GM23248 (cell line): ENCODE measurements at regions of chr19 and their contacts with region 1.

Region 1: GRCh38 chr19:56076498-56076897 is 44.6 kb downstream of the ZNF787 start:
- DNase-seq: peak; percentile 72
- H3K4me3 ChIP-seq: no peak overlapping the region
- H3K27ac ChIP-seq: no peak overlapping the region
- H3K4me1 ChIP-seq: 0 out of 2 replicates have a peak, but pooled peaks cover 3% of the 10 kb centered on the region
- H3K27me3 ChIP-seq: no peaks in the 10 kb centered on the region

Region 2: DNA sequence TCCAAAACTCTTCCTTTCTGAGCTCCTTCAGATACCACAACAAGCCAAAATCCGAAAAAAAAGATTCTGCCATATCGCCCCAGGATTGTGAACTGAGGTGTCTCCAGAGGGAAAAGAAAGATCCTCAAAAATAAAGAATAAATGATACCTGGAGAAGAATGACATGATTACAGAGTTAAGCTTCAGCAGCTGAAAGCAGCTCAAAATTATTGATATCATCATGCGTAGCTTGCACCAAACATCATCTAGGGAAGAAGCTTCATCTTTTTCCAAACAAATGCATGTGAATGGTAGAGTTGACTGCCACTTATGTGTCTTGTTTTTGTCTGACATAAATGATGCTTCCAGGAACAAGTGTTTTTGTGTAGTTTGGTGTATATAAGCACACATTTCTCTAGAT is 338.2 kb before region 1 on chr19 and contains the start of gene NLRP9:
- in situ Hi-C with region 1: no loop called
- DNase-seq: no peak
- H3K4me3 ChIP-seq: no peak within 1 kb of the TSS
- H3K27ac ChIP-seq: no peak within 1 kb of the TSS
- H3K4me1 ChIP-seq: no peaks in the 10 kb centered on the region
- H3K27me3 ChIP-seq: no peaks in the 10 kb centered on the region
- total RNA-seq, gene NLRP9: not detected in 2 replicates

Region 3: DNA sequence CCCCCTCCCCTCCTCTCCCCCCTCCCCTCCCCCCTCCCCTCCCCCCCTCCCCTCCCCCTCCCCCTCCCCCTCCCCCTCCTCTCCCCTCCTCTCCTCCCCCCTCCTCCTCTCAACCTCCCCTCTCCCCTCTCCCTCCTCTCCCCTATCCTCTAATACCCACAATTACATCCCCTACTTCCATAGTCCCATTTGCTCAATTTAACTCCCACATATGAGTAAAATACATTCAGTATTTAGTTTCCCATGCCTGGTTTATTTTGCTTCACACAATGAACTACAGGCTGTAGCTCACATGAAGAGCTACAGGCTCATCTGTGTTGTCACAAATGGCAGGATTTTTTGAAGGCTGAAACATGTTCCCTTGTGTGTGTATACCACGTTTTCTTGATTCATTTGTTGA is 83.0 kb before region 1 on chr19:
- in situ Hi-C with region 1: no loop called
- DNase-seq: peak; percentile 2
- H3K4me3 ChIP-seq: no peak overlapping the region
- H3K27ac ChIP-seq: no peak overlapping the region
- H3K4me1 ChIP-seq: no peaks in the 10 kb centered on the region
- H3K27me3 ChIP-seq: no peaks in the 10 kb centered on the region

Region 4: GRCh38 chr19:56155124-56155687 is 78.7 kb after region 1 on chr19:
- in situ Hi-C with region 1: no loop called
- DNase-seq: peak; percentile 37
- H3K4me3 ChIP-seq: no peak overlapping the region
- H3K27ac ChIP-seq: no peak overlapping the region
- H3K4me1 ChIP-seq: no peaks in the 10 kb centered on the region
- H3K27me3 ChIP-seq: no peaks in the 10 kb centered on the region

Region 5: DNA sequence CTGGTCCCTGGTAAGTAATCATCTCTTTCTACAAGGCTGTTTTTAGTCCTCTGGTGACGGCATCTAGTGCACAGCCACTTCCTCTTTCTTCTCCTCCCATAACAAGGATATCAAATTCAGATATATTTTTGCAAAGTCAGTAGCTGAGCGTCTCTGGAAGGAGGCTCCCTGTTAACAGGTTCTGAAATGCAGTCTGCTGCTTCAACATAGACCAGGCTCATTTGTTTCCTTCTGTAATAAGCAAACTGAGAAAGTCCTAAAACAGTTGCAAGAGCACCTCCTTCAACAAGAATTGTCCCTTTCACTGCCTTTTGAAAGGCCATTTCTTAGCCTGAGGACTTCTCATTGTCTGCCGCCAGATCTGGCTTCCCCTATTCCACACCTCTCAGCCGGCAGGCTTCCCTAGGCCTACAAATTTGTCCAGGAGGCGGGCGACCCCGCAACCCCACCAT is 245.5 kb after region 1 on chr19:
- in situ Hi-C with region 1: loop called (anchors 10 kb)
- DNase-seq: no peak
- H3K4me3 ChIP-seq: no peak overlapping the region
- H3K27ac ChIP-seq: no peak overlapping the region
- H3K4me1 ChIP-seq: no peaks in the 10 kb centered on the region
- H3K27me3 ChIP-seq: no peaks in the 10 kb centered on the region

Region 6: GRCh38 chr19:56367829-56368711 is 291.6 kb after region 1 on chr19:
- in situ Hi-C with region 1: no loop called
- DNase-seq: peak; percentile 98
- H3K4me3 ChIP-seq: peak overlapping the region; percentile 75
- H3K27ac ChIP-seq: peak overlapping the region; percentile 87
- H3K4me1 ChIP-seq: peaks cover 32% of the 10 kb centered on the region
- H3K27me3 ChIP-seq: no peaks in the 10 kb centered on the region